Lower leg skin (tissue), 4 donors: ENCODE measurements at regions of chr5 and their contacts with region 1.

Region 1: DNA sequence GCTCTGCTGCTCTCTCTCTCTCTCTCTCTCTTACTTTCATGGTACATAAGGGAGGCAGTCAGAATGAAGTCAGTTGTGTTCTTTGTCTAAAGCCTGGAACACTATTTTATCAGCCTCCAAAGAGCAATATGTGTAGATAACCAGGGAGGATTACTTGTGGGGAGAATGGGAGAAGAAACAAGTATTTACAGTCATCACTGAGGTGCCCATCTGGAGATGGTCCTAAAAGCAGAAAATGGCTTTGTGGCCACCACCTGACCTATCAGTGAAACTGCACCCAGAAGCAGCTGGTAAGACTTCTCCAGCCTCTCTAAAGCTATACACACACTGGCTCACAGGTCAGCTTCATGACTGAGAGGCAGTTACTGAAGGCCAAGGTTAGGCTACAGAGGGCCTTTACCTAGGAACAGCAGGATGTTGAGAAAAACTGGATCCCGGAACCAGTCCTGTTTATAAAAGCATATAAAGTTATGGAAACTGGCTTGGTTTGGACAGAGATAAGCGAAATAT is 75.1 kb downstream of the MRPS27 start:
- DNase-seq: no peak
- H3K4me3 ChIP-seq: no peak overlapping the region
- CTCF ChIP-seq: no peak
- POLR2A ChIP-seq: no peak

Region 2: DNA sequence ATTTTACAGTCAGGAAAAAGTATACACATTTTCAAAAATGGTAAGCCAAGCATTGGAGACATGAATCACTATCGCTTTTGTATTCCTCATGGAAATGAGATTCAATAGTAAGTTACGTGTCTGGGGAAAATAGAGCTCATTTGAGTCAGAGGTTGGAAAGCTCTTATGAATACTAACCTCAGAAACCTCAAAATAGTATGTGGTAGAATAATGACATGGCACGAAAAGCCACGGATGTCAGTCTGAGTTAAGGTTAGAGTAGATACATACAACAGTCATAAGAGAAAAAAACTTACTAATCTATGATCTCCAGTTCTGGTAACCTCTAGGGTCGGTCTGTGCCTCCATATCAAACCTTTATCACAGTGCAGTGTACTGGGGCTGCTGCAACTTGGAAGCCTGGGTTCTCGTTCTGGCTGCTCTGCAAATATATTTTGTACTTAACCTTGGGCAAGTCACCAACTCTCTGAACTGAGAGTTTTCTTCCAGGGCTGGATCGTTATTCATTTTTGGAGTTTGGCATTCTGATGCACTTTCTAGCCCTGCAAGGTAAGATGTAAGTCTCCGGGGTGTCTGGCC is 105.9 kb before region 1 on chr5:
- intact Hi-C with region 1: loop called (anchors 10 kb)
- DNase-seq: no peak
- H3K4me3 ChIP-seq: no peak overlapping the region
- CTCF ChIP-seq: no peak
- POLR2A ChIP-seq: no peak